HepG2 (cell line): ENCODE measurements at regions of chr3 and their contacts with region 1.

Region 1: DNA sequence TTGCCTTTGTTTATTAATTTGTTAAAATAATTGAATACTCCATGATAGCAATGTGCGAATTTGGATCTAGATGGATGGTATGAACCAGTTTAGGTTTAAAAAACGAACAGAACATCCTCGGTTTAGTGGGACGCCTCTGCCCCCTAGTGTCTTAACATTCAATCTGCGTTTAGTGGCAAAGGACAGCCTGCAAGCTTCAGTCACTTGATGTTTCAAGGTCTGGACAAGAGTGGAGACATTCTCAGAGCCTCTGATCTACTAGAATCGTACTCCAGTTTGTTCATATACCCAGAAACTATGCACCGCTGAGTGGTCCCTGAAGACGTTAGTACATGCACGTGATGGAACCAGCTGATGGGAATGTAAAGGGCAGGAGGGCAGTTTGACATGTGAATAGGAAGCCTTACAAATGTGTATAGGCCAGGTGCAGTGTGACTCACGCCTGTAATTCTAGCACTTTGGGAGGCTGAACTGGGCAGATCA is 17.8 kb upstream of the ATP13A4 start:
- DNase-seq: peak; percentile 44
- ATAC-seq: peak; percentile 91
- H3K4me3 ChIP-seq: no peak overlapping the region
- H3K27ac ChIP-seq: no peak overlapping the region
- H3K4me1 ChIP-seq: no peaks in the 10 kb centered on the region
- H3K27me3 ChIP-seq: 0 out of 5 replicates have a peak, but pooled peaks cover 0 to 2% of the 10 kb centered on the region in 2 experiments
- CTCF ChIP-seq: peak; percentile 86
- EP300 ChIP-seq: no peak
- POLR2A ChIP-seq: no peak
- RAD21 ChIP-seq: peak; percentile 68; the same call in 1 of the 2 replicates

Region 2: DNA sequence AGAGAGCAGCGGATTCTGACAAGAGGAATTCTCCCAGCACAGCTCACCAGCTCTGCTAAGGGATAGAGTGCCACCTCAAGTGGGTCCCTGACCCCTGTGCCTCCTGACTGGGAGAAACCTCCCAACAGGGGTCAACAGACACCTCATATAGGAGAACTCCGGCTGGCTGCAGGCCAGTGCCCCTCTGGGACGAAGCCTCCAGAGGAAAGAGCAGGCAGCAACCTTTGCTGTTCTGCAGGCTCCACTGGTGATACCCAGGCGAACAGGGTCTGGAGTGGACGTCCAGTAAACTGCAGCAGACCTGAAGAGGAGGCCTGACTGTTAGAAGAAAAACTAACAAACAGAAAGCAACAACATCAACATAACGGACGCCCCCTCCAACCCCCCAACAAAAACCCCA is 813.8 kb before region 1 on chr3:
- CTCF ChIA-PET with region 1: no interaction called
- POLR2A ChIA-PET with region 1: no interaction called
- in situ Hi-C with region 1: no loop called
- intact Hi-C with region 1: no loop called
- DNase-seq: no peak
- ATAC-seq: no peak
- H3K4me3 ChIP-seq: no peak overlapping the region
- H3K27ac ChIP-seq: no peak overlapping the region
- H3K4me1 ChIP-seq: no peaks in the 10 kb centered on the region
- H3K27me3 ChIP-seq: no peaks in the 10 kb centered on the region
- CTCF ChIP-seq: no peak
- EP300 ChIP-seq: no peak
- POLR2A ChIP-seq: no peak
- RAD21 ChIP-seq: no peak

Region 3: GRCh38 chr3:193040836-193041672 is 531.4 kb before region 1 on chr3:
- CTCF ChIA-PET with region 1: interaction called, 4 read pairs
- POLR2A ChIA-PET with region 1: no interaction called
- in situ Hi-C with region 1: loop called (anchors 25 kb)
- intact Hi-C with region 1: no loop called
- DNase-seq: peak; percentile 24
- ATAC-seq: peak; percentile 60; the same call in 2 of the 3 replicates
- H3K4me3 ChIP-seq: no peak overlapping the region
- H3K27ac ChIP-seq: no peak overlapping the region
- H3K4me1 ChIP-seq: no peaks in the 10 kb centered on the region
- H3K27me3 ChIP-seq: no peaks in the 10 kb centered on the region
- CTCF ChIP-seq: peak; percentile 58
- EP300 ChIP-seq: no peak
- POLR2A ChIP-seq: no peak
- RAD21 ChIP-seq: no peak

Region 4: DNA sequence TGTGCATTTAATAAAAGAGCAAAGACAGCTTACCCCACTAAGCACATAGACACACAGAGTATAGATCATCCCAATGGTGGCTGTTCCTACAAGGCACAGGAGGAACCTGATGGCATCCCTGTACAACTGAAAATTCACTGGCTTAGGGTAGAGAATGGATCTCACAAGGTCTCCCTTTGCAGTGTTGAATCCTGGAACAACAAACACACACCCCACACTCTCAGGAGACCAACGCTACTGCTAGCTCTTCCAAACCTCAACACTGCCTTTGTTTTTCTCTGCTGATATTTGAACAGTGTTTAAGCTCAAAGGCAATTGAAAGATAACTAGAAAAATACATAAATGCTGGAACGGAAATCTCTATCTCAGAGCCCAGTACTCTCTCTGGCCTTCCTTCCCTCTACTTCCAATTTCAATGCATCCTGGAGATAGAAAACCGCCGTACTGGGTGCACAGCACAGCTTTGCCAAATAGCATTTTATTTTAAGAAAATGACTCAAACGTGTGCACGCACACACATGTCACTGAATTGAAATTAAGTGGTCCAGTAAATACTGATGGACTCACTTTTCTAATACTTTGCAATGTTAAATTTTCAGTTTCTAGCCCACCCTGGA is 106.4 kb before region 1 on chr3:
- CTCF ChIA-PET with region 1: interaction called, 25 read pairs
- POLR2A ChIA-PET with region 1: no interaction called
- in situ Hi-C with region 1: loop called (anchors 5 kb)
- intact Hi-C with region 1: loop called (anchors 1 kb)
- DNase-seq: no peak
- ATAC-seq: no peak
- H3K4me3 ChIP-seq: no peak overlapping the region
- H3K27ac ChIP-seq: no peak overlapping the region
- H3K4me1 ChIP-seq: no peaks in the 10 kb centered on the region
- H3K27me3 ChIP-seq: no peaks in the 10 kb centered on the region
- CTCF ChIP-seq: no peak
- EP300 ChIP-seq: no peak
- POLR2A ChIP-seq: no peak
- RAD21 ChIP-seq: no peak